Calu3 (cell line): ENCODE measurements at regions of chr18 and their contacts with region 1.

Region 1: GRCh38 chr18:3541549-3542386 is 91.8 kb downstream of the TGIF1 start:
- DNase-seq: peak; percentile 21
- H3K4me3 Mint-ChIP-seq: peak overlapping the region; percentile 38
- H3K27ac Mint-ChIP-seq: peak overlapping the region; percentile 81
- H3K4me1 Mint-ChIP-seq: peaks cover 43% of the 10 kb centered on the region
- H3K27me3 Mint-ChIP-seq: no peaks in the 10 kb centered on the region
- CTCF ChIP-seq: no peak

Region 2: DNA sequence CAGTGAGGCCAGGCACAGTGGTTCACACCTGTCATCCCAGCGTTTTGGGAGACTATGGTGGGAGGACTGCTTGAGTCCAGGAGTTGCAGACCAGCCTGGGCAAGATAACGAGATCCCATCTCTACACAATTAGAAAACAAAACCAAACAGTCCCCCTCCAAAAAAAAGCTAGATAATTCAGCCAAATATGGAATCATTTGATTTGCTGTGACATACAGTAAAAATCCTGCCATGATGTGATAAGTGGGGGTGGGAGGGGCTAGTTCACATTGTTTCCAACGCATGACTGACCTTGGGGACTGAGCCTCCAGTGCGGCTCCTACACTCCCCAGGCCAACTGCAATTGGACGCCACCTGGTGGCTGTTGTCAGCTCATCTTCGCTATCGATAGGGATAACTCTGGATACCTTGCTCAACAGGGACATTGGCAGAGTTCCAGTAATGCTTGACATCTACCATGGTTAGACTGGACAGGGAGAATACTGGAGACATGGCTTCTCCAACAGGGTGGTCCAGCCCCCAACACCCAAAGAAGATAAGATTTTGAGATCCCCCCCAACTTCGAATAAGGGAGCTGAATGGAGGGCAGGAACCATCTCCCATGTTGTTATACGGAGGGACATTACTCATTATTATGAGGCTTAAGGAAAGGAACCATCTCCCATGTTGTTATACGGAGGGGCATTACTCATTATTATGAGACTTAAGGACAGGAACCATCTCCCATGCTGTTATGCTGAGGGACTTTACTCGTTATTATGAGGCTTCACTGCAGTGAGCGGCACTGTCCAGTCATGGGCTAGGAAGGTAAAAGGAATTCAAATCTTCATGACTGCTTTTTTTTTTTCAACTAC is 44.1 kb after region 1 on chr18:
- CTCF ChIA-PET with region 1: no interaction called
- intact Hi-C with region 1: loop called (anchors 2 kb)
- DNase-seq: peak; percentile 91
- H3K4me3 Mint-ChIP-seq: no peak overlapping the region
- H3K27ac Mint-ChIP-seq: peak overlapping the region; percentile 73
- H3K4me1 Mint-ChIP-seq: peaks cover 34% of the 10 kb centered on the region
- H3K27me3 Mint-ChIP-seq: no peaks in the 10 kb centered on the region
- CTCF ChIP-seq: peak; percentile 89

Region 3: GRCh38 chr18:3623769-3624545 is 82.2 kb after region 1 on chr18:
- CTCF ChIA-PET with region 1: no interaction called
- intact Hi-C with region 1: no loop called
- DNase-seq: peak; percentile 88
- H3K4me3 Mint-ChIP-seq: peak overlapping the region; percentile 63
- H3K27ac Mint-ChIP-seq: peak overlapping the region; percentile 98
- H3K4me1 Mint-ChIP-seq: peaks cover 81% of the 10 kb centered on the region
- H3K27me3 Mint-ChIP-seq: no peaks in the 10 kb centered on the region
- CTCF ChIP-seq: no peak